ENCODE measurements at regions of chr4 and their contacts with region 1.

Region 1: DNA sequence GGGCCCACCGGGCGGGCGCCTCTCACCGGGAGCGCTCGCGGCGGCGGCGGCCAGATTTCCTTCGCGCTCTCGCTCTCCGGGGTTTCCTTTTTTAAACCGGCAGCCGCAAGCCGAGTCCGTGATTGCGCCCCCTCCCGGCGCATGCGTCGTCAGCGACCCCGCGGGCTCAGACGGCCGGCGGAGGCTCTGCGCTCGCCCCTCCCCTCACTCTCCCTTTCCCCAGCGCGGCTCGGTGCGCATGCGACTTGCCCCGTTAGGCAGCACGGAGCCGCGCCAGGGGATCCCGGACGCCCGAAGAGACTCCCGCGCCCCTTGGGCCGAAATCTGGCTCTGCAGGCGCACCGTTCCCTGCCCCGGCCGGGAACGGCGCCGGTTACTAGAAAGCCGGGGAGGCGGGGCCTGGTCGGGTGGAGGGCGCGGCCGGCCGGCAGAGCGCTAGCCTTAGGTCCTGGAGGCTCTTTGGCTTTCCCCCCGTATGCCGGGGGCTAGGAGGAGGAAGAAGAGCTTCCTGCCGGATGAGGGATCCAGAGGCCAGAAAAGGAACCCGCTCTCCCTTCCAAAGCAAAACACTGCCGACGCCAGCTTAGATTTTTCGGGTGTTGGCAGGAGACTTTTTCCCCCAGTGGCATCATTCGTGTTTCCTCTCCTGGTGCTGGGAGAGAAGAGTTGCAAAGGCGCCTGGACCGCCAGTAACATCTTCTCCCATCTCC is at the start of gene CLOCK:
- DNase-seq: peak; percentile 87 to 90
- H3K4me3 ChIP-seq: peak within 1 kb of the TSS; percentile 76 to 80
- H3K27ac ChIP-seq: peak within 1 kb of the TSS; percentile 98 to 99
- H3K4me1 ChIP-seq: no peaks in the 10 kb centered on the region
- H3K27me3 ChIP-seq: no peaks in the 10 kb centered on the region
- CTCF ChIP-seq: peak; percentile 48 to 71 (median 58)
- POLR2A ChIP-seq: peak; percentile 40 to 72
- total RNA-seq, gene CLOCK: 13.3 to 60.3 (median 29.1) TPM

Region 2: DNA sequence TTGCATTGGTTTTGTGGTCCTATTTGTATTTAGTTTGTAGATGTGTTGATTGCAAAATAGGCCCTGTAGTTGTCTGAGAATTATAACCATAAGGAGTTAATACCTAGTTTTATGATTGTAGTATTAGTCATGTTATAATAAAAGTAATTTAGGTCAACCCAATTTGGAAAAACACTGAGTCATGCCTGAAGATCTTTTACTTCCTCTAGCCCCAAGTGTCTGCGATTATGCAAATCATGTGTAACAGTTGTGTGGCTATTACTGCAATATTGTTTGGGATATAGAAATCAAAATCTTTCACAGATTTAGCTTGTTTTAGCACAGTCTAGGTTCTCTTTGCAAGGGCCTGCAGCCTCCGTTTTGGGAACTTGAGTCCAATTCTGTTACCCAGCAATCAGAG is 188.2 kb before region 1 on chr4:
- intact Hi-C with region 1: loop called (anchors 5 kb)
- DNase-seq: peak in 1 of 2 donors; percentile 29
- H3K4me3 ChIP-seq: no peak overlapping the region
- H3K27ac ChIP-seq: peak overlapping the region; percentile 77 to 86
- H3K4me1 ChIP-seq: peaks cover 0 to 7% of the 10 kb centered on the region in 2 donors
- H3K27me3 ChIP-seq: no peaks in the 10 kb centered on the region
- CTCF ChIP-seq: no peak
- POLR2A ChIP-seq: no peak